MCF 10A (cell line): ENCODE measurements at regions of chr9 and their contacts with region 1.

Region 1: GRCh38 chr9:37920471-37921167 is 16.7 kb upstream of the SLC25A51 start:
- DNase-seq: no peak
- H3K4me3 Mint-ChIP-seq: no peak overlapping the region
- H3K27ac Mint-ChIP-seq: peak overlapping the region; percentile 85
- H3K4me1 Mint-ChIP-seq: peaks cover 15% of the 10 kb centered on the region
- H3K27me3 Mint-ChIP-seq: no peaks in the 10 kb centered on the region
- CTCF ChIP-seq: no peak

Region 2: DNA sequence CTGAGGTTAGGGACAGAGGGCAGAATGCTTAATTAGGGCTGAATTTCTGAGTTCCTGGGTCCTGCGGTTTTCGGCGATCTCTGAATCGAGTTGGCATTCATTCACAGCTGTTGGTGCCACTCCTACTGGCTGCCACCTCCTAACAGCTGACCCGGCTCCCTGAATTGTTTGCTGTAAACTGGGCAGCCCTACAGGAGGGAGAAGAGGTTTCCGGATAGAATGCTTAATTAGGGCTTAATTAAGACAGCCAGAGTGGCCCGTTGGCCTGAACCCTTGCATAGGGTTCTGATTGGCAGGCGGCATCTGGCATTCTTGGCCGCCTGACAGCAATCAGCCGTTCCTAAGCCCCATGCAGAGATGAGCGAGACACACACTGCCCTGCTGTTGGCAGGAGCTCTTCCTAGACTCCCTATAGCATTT is 244.2 kb before region 1 on chr9:
- CTCF ChIA-PET with region 1: no interaction called
- POLR2A ChIA-PET with region 1: no interaction called
- intact Hi-C with region 1: no loop called
- DNase-seq: no peak
- H3K4me3 Mint-ChIP-seq: no peak overlapping the region
- H3K27ac Mint-ChIP-seq: no peak overlapping the region
- H3K4me1 Mint-ChIP-seq: no peaks in the 10 kb centered on the region
- H3K27me3 Mint-ChIP-seq: peaks cover 69% of the 10 kb centered on the region
- CTCF ChIP-seq: no peak

Region 3: GRCh38 chr9:37903647-37904444 is 16.8 kb before region 1 on chr9 and contains the start of gene SLC25A51:
- CTCF ChIA-PET with region 1: interaction called, 10 read pairs
- POLR2A ChIA-PET with region 1: interaction called, 4 read pairs
- intact Hi-C with region 1: no loop called
- DNase-seq: peak; percentile 93
- H3K4me3 Mint-ChIP-seq: peak within 1 kb of the TSS; percentile 80
- H3K27ac Mint-ChIP-seq: peak within 1 kb of the TSS; percentile 95
- H3K4me1 Mint-ChIP-seq: peaks cover 30% of the 10 kb centered on the region
- H3K27me3 Mint-ChIP-seq: no peaks in the 10 kb centered on the region
- CTCF ChIP-seq: peak; percentile 93
- total RNA-seq, gene SLC25A51: 29.6 and 30.3 TPM in 2 replicates

Region 4: GRCh38 chr9:37963936-37964739 is 43.5 kb after region 1 on chr9:
- CTCF ChIA-PET with region 1: interaction called, 14 read pairs
- POLR2A ChIA-PET with region 1: no interaction called
- intact Hi-C with region 1: no loop called
- DNase-seq: peak; percentile 89
- H3K4me3 Mint-ChIP-seq: no peak overlapping the region
- H3K27ac Mint-ChIP-seq: peak overlapping the region; percentile 92
- H3K4me1 Mint-ChIP-seq: peaks cover 50% of the 10 kb centered on the region
- H3K27me3 Mint-ChIP-seq: no peaks in the 10 kb centered on the region
- CTCF ChIP-seq: no peak

Region 5: GRCh38 chr9:37984672-37985611 is 64.3 kb after region 1 on chr9:
- CTCF ChIA-PET with region 1: no interaction called
- POLR2A ChIA-PET with region 1: no interaction called
- intact Hi-C with region 1: no loop called
- DNase-seq: peak; percentile 78
- H3K4me3 Mint-ChIP-seq: peak overlapping the region; percentile 36
- H3K27ac Mint-ChIP-seq: peak overlapping the region; percentile 67
- H3K4me1 Mint-ChIP-seq: peaks cover 19% of the 10 kb centered on the region
- H3K27me3 Mint-ChIP-seq: no peaks in the 10 kb centered on the region
- CTCF ChIP-seq: no peak

Region 6: DNA sequence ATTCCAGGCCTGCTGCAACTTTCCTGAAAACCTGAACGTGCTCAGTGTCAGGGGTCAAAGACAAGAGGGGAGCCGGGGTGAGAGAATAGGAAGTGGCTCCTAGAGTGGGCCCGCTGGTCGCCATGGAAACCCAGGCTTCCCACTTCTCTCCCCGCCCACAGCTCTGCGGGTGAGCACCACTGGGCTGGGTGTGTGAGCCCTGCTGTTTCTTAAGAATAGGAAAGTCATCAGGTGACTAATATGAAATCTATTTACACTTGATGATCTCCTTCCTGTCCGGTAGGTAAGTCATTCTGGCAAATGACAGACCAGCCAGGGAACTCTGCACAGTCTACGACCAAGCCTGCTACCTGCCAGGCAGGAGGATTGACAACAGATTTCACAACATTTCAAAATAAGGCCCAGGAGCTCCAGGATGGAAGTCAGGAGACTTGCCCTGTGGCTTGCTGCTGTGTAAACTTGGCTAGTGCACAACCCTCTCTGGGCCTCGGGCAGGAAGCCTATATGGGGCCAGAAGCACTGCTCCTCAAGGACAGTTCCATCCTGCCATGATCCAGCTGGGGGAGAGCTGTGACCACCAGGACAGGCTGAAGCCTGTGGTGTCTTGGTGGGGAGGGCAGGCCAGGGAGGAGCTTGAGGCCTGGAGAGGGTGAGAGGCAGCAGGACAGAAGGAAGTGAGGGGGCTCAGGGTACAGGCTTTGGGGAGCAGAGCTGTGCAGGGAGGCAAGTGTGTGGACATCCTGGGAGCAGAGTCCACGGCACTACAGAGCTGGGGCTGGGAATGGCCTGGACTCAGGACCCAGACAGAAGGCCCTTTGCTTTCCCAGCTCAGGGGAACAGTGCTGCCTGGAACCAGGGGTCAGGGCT is 87.8 kb after region 1 on chr9:
- CTCF ChIA-PET with region 1: interaction called, 7 read pairs
- POLR2A ChIA-PET with region 1: interaction called, 5 read pairs
- intact Hi-C with region 1: loop called (anchors 5 kb)
- DNase-seq: peak; percentile 93
- H3K4me3 Mint-ChIP-seq: no peak overlapping the region
- H3K27ac Mint-ChIP-seq: peak overlapping the region; percentile 99
- H3K4me1 Mint-ChIP-seq: peaks cover 44% of the 10 kb centered on the region
- H3K27me3 Mint-ChIP-seq: no peaks in the 10 kb centered on the region
- CTCF ChIP-seq: no peak

Region 7: DNA sequence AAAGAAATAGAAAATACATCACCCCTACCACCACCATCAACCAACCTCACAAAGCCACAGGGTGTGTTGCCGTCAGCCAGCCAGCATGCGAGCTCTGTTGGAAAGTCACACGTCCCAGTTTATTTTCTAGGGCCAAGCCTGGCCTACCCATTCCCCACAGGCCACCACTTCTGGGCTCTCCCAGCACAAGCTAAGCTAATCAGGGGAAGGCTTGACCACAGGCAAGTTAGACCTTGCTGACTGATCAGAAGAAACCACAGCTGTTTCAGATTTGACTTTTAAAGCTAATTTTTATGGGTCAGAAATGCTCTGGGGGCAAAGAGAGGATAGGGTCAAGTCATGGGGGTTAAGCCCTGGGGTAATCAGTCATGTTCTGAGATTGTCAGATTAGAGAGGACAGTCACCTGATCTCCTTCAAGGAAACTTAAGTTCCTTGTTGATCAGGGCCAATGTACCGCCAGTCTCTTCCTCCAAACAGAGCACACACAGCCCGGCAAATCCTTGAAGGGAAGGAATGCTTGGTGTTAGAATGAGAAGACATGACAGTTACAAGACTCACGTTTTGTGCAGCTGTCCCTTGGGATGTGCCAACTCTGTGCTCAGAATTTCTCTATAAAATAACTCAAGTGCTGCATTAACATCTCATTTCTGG is 140.8 kb after region 1 on chr9:
- CTCF ChIA-PET with region 1: interaction called, 59 read pairs
- POLR2A ChIA-PET with region 1: interaction called, 4 read pairs
- intact Hi-C with region 1: no loop called
- DNase-seq: no peak
- H3K4me3 Mint-ChIP-seq: no peak overlapping the region
- H3K27ac Mint-ChIP-seq: no peak overlapping the region
- H3K4me1 Mint-ChIP-seq: peaks cover 50% of the 10 kb centered on the region
- H3K27me3 Mint-ChIP-seq: no peaks in the 10 kb centered on the region
- CTCF ChIP-seq: no peak

Region 8: DNA sequence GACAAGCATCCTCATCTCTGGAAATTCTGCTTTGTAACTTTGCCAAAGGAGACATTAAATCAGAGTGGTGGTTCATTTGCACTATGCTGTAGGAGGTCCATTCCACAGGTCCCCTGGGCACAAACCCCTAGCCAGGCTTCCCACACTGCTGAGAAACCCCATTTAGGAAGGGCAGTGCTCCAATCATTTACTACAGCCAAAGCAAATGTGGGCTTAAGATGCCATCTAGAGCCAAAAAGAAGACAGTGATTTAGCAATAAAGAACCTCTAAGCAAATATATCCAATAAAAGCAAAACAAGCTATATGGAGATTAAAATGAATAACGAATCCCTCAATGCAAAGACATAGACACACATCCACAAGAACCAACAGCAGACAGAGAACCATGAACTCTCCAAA is 342.9 kb after region 1 on chr9:
- CTCF ChIA-PET with region 1: interaction called, 89 read pairs
- POLR2A ChIA-PET with region 1: no interaction called
- intact Hi-C with region 1: no loop called
- DNase-seq: peak; percentile 43
- H3K4me3 Mint-ChIP-seq: no peak overlapping the region
- H3K27ac Mint-ChIP-seq: no peak overlapping the region
- H3K4me1 Mint-ChIP-seq: no peaks in the 10 kb centered on the region
- H3K27me3 Mint-ChIP-seq: peaks cover 67% of the 10 kb centered on the region
- CTCF ChIP-seq: peak; percentile 48